ENCODE measurements at regions of chr2 and their contacts with region 1.

Region 1: DNA sequence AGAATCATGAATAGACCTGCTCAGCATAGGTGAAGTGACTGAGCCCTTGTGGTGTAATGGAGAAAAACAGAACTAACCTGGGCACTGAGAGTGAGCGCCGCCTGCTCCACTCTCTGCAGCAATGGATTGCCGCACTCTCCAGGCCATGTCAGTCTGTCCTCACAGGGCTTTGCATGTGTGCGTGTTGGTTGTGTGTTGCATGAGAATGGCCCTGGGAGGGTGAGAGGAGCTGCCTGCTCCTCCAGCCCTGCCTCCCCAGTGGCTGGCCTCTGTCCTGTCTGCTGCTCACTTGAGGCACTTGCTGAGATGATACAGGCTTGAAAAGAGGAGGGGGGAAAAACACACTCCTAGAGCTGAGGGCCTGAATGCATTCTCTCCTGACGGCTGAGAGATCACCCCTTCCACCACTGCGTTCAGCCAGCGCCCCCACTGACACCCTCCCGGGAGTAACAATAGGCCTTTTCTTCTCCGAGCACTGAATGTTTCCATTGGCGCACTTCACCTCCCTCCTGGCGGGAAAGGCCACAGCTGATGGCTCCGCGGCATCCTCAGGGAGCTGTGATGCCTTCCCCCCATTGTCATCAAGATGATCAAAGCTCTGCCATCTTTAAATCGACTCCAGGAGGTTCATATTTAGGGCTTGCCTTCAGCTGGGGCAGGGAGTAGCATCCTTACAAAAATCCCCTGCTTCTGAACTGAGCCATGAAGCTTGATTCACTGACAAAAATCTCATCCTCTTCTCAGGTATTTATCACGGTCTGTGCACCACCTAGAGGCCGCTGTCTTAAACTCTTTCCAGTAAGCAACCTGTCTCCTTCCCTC is 49.9 kb upstream of the DAPL1 start:
- DNase-seq: peak; percentile 48
- H3K27ac ChIP-seq: no peak overlapping the region
- CTCF ChIP-seq: peak; percentile 61

Region 2: GRCh38 chr2:158034199-158034866 is 710.9 kb before region 1 on chr2:
- CTCF ChIA-PET with region 1: interaction called, 21 read pairs
- POLR2A ChIA-PET with region 1: no interaction called
- DNase-seq: peak; percentile 52
- H3K27ac ChIP-seq: no peak overlapping the region
- CTCF ChIP-seq: no peak

Region 3: GRCh38 chr2:158179660-158180059 is 565.6 kb before region 1 on chr2:
- CTCF ChIA-PET with region 1: interaction called, 10 read pairs
- POLR2A ChIA-PET with region 1: no interaction called
- DNase-seq: peak; percentile 13
- H3K27ac ChIP-seq: no peak overlapping the region
- CTCF ChIP-seq: peak; percentile 28